CD8-positive, alpha-beta T cell (primary cell): ENCODE measurements at regions of chr19 and their contacts with region 1.

Region 1: GRCh38 chr19:33373701-33374421 is at the start of gene CEBPG:
- DNase-seq: peak in 8 of 9 experiments; percentile 21 to 86 (median 56)
- ATAC-seq: peak; percentile 37
- H3K4me3 ChIP-seq: peak within 1 kb of the TSS; percentile 90 to 91
- H3K4me3 Mint-ChIP-seq: peak within 1 kb of the TSS; percentile 84
- H3K27ac ChIP-seq: peak within 1 kb of the TSS; percentile 77 to 86
- H3K27ac Mint-ChIP-seq: peak within 1 kb of the TSS; percentile 88
- H3K4me1 ChIP-seq: peaks cover 15% of the 10 kb centered on the region
- H3K4me1 Mint-ChIP-seq: peaks cover 46% of the 10 kb centered on the region
- H3K27me3 ChIP-seq: no peaks in the 10 kb centered on the region
- H3K27me3 Mint-ChIP-seq: no peaks in the 10 kb centered on the region
- CTCF ChIP-seq: no peak
- total RNA-seq, gene CEBPG: 14.4 to 17.2 TPM

Region 2: GRCh38 chr19:32345261-32346207 is 1028.3 kb before region 1 on chr19 and contains the start of gene ZNF507:
- CTCF ChIA-PET with region 1: no interaction called
- POLR2A ChIA-PET with region 1: no interaction called
- intact Hi-C with region 1: loop called (anchors 5 to 10 kb)
- DNase-seq: peak; percentile 58 to 88 (median 80)
- ATAC-seq: peak; percentile 78
- H3K4me3 ChIP-seq: peak within 1 kb of the TSS; percentile 69 to 91
- H3K4me3 Mint-ChIP-seq: peak within 1 kb of the TSS; percentile 95
- H3K27ac ChIP-seq: peak within 1 kb of the TSS; percentile 68 to 75
- H3K27ac Mint-ChIP-seq: peak within 1 kb of the TSS; percentile 97
- H3K4me1 ChIP-seq: peaks cover 39% of the 10 kb centered on the region
- H3K4me1 Mint-ChIP-seq: peaks cover 42% of the 10 kb centered on the region
- H3K27me3 ChIP-seq: no peaks in the 10 kb centered on the region
- H3K27me3 Mint-ChIP-seq: no peaks in the 10 kb centered on the region
- CTCF ChIP-seq: no peak
- total RNA-seq, gene ZNF507: 28.4 to 29.6 TPM

Region 3: DNA sequence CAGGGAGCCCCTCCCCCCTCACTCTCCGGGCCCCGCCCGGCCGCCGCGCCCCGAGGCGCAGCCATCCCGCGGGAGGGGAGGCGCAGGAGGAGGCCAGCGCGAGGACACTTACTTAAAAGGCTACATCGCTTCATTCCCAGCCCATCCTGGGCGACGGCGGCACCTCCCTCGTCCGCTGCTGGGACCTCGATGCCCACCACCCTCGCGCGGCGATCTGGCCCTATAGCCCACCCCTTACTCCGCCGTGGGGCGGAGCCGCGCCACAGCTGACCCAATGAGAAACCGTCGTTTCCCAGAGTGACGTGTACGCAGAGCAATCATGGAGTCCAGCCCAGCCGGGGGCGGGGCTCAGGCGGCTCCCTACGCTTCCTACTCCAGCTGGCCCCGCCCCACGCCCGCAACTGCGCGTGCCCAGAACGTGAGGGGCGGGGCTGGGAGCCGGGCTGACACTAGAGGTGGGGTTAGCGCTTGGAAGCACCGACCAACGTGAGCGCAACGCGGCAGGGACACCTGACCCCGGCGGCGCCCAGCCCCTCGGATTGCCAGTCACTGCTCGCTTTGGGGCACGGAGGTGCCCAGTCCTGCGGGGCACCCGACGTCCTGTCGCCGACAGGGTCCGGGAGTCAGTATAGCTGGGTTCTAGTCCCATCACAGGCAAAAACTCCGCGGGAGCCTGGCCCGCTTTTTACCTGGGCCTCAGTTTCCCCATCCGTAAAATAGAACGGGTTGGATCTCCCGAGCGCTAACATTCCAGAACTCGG is 698.7 kb before region 1 on chr19 and contains the start of gene ANKRD27:
- CTCF ChIA-PET with region 1: no interaction called
- POLR2A ChIA-PET with region 1: no interaction called
- intact Hi-C with region 1: loop called in 1 of 2 experiments (anchors 5 kb)
- DNase-seq: peak; percentile 95 to 99 (median 98)
- ATAC-seq: peak; percentile 94
- H3K4me3 ChIP-seq: peak within 1 kb of the TSS; percentile 93 to 99
- H3K4me3 Mint-ChIP-seq: peak within 1 kb of the TSS; percentile 94
- H3K27ac ChIP-seq: peak within 1 kb of the TSS; percentile 70 to 82
- H3K27ac Mint-ChIP-seq: peak within 1 kb of the TSS; percentile 80
- H3K4me1 ChIP-seq: peaks cover 32% of the 10 kb centered on the region
- H3K4me1 Mint-ChIP-seq: peaks cover 44% of the 10 kb centered on the region
- H3K27me3 ChIP-seq: peaks cover 0 to 6% of the 10 kb centered on the region in 2 experiments
- H3K27me3 Mint-ChIP-seq: peaks cover 11% of the 10 kb centered on the region
- CTCF ChIP-seq: no peak
- total RNA-seq, gene ANKRD27: 15.2 to 16.0 TPM

Region 4: GRCh38 chr19:33394006-33394849 is 20.4 kb after region 1 on chr19:
- CTCF ChIA-PET with region 1: no interaction called
- POLR2A ChIA-PET with region 1: no interaction called
- intact Hi-C with region 1: no loop called
- DNase-seq: no peak
- ATAC-seq: no peak
- H3K4me3 ChIP-seq: no peak overlapping the region
- H3K4me3 Mint-ChIP-seq: no peak overlapping the region
- H3K27ac ChIP-seq: no peak overlapping the region
- H3K27ac Mint-ChIP-seq: no peak overlapping the region
- H3K4me1 ChIP-seq: no peaks in the 10 kb centered on the region
- H3K4me1 Mint-ChIP-seq: no peaks in the 10 kb centered on the region
- H3K27me3 ChIP-seq: no peaks in the 10 kb centered on the region
- H3K27me3 Mint-ChIP-seq: no peaks in the 10 kb centered on the region
- CTCF ChIP-seq: no peak

Region 5: GRCh38 chr19:33406521-33407139 is 32.8 kb after region 1 on chr19:
- CTCF ChIA-PET with region 1: interaction called, 12 read pairs
- POLR2A ChIA-PET with region 1: no interaction called
- intact Hi-C with region 1: no loop called
- DNase-seq: peak; percentile 54 to 86 (median 74)
- ATAC-seq: peak; percentile 80
- H3K4me3 ChIP-seq: no peak overlapping the region
- H3K4me3 Mint-ChIP-seq: no peak overlapping the region
- H3K27ac ChIP-seq: no peak overlapping the region
- H3K27ac Mint-ChIP-seq: no peak overlapping the region
- H3K4me1 ChIP-seq: no peaks in the 10 kb centered on the region
- H3K4me1 Mint-ChIP-seq: no peaks in the 10 kb centered on the region
- H3K27me3 ChIP-seq: no peaks in the 10 kb centered on the region
- H3K27me3 Mint-ChIP-seq: no peaks in the 10 kb centered on the region
- CTCF ChIP-seq: peak; percentile 86

Region 6: DNA sequence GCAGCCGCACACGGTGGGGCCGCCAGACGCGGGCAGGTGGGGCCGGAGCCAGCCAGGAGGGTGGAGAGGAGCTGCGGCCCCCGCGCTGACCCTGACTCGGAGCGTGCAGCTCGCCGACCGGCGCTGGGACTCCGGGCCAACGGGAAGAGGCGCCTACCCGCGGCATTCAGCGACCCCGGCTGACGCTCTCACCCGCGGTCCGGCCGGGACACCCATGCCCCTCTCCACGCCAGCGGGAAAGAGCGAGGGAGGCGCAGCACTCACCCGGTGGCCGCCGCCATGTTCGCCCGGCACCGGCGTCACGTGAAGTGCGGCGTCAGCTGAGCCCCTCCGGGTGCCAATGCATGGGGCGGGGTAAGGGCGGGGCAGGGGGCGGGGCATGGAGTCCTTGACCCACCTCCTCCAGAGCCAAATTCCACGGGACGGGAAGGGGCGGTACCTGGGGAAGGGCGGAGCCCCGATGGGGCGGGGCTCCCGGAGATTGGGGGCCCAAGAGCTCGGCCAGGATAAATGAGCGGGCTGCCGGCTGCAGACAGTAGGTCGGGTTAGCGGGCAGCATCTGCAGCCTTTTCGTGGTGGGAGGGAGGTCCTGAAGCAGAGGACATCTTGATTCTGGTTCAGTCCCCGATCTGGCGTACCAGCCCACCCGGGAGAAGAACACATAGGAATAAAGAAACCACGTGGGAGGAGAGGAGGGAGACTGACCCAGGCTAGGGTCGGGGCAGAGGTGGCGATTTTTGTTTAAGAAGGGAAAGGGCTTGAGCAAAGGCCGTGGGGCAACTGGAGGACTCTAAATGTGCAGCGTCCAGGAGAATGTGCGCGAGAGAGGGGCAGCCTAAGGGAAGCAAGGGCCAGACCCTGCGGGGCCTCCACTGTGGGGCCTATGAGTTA is 147.9 kb after region 1 on chr19 and contains the start of gene PEPD:
- CTCF ChIA-PET with region 1: no interaction called
- POLR2A ChIA-PET with region 1: no interaction called
- intact Hi-C with region 1: loop called in 1 of 2 experiments (anchors 5 kb)
- DNase-seq: peak; percentile 59 to 90 (median 78)
- ATAC-seq: peak; percentile 97
- H3K4me3 ChIP-seq: peak within 1 kb of the TSS; percentile 63 to 81
- H3K4me3 Mint-ChIP-seq: peak within 1 kb of the TSS; percentile 89
- H3K27ac ChIP-seq: peak within 1 kb of the TSS; percentile 39 to 48
- H3K27ac Mint-ChIP-seq: peak within 1 kb of the TSS; percentile 85
- H3K4me1 ChIP-seq: peaks cover 18% of the 10 kb centered on the region
- H3K4me1 Mint-ChIP-seq: peaks cover 26% of the 10 kb centered on the region
- H3K27me3 ChIP-seq: no peaks in the 10 kb centered on the region
- H3K27me3 Mint-ChIP-seq: no peaks in the 10 kb centered on the region
- CTCF ChIP-seq: no peak
- total RNA-seq, gene PEPD: 14.1 to 14.4 TPM

Region 7: DNA sequence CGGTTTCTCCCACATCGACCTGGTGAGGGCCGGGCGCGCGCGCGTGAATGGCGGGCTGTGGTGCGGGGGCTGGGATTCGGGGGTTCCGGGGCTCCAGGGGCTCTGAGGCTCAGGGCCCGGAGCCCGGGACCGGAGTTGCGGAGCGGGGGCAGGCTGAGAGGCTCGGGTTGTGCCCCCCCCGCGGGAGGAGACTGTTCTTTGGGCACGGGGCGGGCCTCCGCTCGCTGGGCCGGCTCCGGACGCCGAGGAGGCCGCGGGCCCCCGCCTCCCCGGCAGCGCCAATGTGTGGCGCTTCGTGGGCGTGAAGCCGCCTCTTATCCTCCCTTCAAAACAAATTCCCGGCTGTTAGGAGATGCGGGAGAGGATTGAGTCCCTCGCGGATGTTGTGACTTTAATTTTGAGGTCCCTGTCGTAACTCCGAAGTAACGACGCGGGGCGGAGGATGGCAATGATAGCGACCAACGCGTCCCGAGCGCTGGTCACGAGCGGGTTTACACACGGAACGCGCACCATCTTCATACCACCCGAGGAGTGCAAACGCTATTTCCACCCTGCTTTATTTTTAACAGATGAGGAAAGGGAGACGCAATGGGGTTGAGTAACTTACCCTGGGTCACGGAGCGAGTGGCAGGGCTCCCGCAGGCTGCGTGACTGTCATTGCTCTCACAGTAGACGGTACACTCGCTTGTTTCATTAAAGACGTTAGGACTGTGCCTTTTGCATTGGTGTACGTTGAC is 1054.9 kb after region 1 on chr19:
- CTCF ChIA-PET with region 1: no interaction called
- POLR2A ChIA-PET with region 1: no interaction called
- intact Hi-C with region 1: loop called in 1 of 2 experiments (anchors 5 kb)
- DNase-seq: peak in 5 of 9 experiments; percentile 24 to 61 (median 35)
- ATAC-seq: peak; percentile 43
- H3K4me3 ChIP-seq: peak overlapping the region; percentile 58 to 84
- H3K4me3 Mint-ChIP-seq: peak overlapping the region; percentile 99
- H3K27ac ChIP-seq: peak overlapping the region; percentile 76 to 82
- H3K27ac Mint-ChIP-seq: peak overlapping the region; percentile 96
- H3K4me1 ChIP-seq: peaks cover 29% of the 10 kb centered on the region
- H3K4me1 Mint-ChIP-seq: peaks cover 41% of the 10 kb centered on the region
- H3K27me3 ChIP-seq: no peaks in the 10 kb centered on the region
- H3K27me3 Mint-ChIP-seq: no peaks in the 10 kb centered on the region
- CTCF ChIP-seq: no peak